ENCODE measurements at regions of chr3 and their contacts with region 1.

Region 1: DNA sequence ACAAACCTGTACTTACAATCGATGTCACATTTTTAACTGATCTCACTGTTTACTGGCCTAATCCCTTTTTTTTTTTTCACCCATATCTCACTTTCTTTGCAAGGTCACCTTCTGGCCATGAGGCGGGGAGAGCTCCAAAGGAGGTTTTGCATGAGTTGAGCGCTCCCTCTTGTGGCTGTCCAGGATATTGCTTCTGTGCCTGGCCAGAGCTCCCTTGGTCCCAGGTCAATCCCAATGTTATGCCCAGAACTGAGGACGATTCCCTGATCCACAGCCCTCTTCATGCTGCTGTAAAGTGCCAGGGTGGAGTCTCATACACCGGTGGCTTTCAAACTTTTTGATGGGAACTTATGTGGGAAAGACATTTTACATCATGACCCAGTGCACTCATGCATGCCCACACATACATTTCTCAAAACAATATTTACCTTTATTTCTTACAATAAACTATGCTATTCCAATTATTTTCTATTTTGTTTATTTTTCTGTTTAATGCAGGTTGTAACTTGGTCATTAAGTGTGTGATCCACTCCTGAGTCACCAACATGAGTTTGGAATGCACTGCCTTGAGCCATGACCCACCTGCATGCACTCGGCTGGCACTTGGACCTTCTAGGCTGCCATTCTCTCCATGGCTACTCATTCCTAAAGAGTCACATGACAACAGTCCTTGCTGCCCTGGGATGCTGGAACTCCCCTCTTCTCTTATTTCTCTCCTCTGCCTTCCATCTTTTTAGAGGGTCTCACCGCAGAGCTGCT is 9.6 kb upstream of the SST start:
- DNase-seq: peak; percentile 78
- ATAC-seq: peak; percentile 70
- H3K4me3 Mint-ChIP-seq: no peak overlapping the region
- H3K27ac Mint-ChIP-seq: no peak overlapping the region
- H3K4me1 Mint-ChIP-seq: peaks cover 7% of the 10 kb centered on the region
- H3K27me3 Mint-ChIP-seq: peaks cover 30% of the 10 kb centered on the region
- CTCF ChIP-seq: peak; percentile 88

Region 2: GRCh38 chr3:187565701-187566100 is 114.1 kb before region 1 on chr3:
- CTCF ChIA-PET with region 1: interaction called, 11 read pairs
- POLR2A ChIA-PET with region 1: no interaction called
- intact Hi-C with region 1: no loop called
- DNase-seq: no peak
- ATAC-seq: no peak
- H3K4me3 Mint-ChIP-seq: no peak overlapping the region
- H3K27ac Mint-ChIP-seq: no peak overlapping the region
- H3K4me1 Mint-ChIP-seq: no peaks in the 10 kb centered on the region
- H3K27me3 Mint-ChIP-seq: peaks cover 18% of the 10 kb centered on the region
- CTCF ChIP-seq: no peak

Region 3: GRCh38 chr3:187616307-187616972 is 63.4 kb before region 1 on chr3:
- CTCF ChIA-PET with region 1: interaction called, 89 read pairs
- POLR2A ChIA-PET with region 1: interaction called, 3 read pairs
- intact Hi-C with region 1: loop called (anchors 5 kb)
- DNase-seq: peak; percentile 77
- ATAC-seq: peak; percentile 70
- H3K4me3 Mint-ChIP-seq: no peak overlapping the region
- H3K27ac Mint-ChIP-seq: no peak overlapping the region
- H3K4me1 Mint-ChIP-seq: peaks cover 4% of the 10 kb centered on the region
- H3K27me3 Mint-ChIP-seq: peaks cover 12% of the 10 kb centered on the region
- CTCF ChIP-seq: peak; percentile 79

Region 4: DNA sequence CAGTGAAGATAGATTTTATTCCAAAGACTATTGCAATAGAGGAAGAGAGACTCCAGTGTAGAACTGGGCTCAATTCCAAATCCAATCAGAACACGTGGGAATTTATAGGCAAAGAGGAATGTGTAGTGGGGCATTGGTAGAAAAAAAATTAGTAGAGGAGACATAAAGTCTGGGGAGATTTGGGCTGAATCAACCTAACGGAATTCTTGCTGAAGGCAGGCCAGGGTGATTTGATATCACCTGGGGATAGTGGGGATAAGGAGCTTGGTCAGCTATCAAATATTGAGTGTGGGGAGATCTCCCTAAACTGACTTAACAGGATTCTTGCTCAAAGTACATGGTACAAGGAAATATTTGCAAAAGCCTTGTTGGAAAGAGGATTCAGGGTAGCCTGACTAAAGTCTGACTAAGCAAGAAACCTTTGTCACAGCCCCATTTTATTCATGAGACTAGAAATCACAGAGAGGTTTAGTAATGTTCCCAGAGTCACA is 39.2 kb before region 1 on chr3:
- CTCF ChIA-PET with region 1: interaction called, 11 read pairs
- POLR2A ChIA-PET with region 1: no interaction called
- intact Hi-C with region 1: no loop called
- DNase-seq: no peak
- ATAC-seq: no peak
- H3K4me3 Mint-ChIP-seq: no peak overlapping the region
- H3K27ac Mint-ChIP-seq: no peak overlapping the region
- H3K4me1 Mint-ChIP-seq: no peaks in the 10 kb centered on the region
- H3K27me3 Mint-ChIP-seq: peaks cover 13% of the 10 kb centered on the region
- CTCF ChIP-seq: no peak

Region 5: DNA sequence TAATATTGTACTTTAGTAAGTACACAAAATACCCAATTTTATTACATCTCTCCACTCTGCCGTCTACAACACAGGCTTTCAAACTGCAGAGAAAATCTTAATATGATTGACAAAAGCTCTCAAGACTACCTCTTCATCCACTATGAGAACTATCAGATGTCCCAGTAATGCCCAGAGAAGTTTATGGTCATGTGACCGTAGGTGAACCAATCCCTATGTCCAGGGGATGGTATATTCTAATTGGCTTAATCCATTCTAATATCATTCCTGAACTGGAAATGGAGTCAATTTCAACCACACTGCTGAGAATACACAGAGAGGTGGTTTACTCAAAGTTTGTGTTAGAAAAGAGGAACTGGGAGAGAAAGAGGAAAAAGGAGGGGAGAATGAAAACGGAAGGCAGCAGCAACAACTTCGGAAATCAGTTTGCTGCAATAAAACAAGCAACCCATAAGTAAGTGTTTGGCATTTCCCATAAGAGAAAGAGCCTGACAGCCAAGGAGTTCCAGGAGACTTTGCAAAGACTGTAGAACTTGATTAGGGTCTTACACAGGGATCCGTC is 16.9 kb before region 1 on chr3:
- CTCF ChIA-PET with region 1: interaction called, 44 read pairs
- POLR2A ChIA-PET with region 1: no interaction called
- intact Hi-C with region 1: no loop called
- DNase-seq: no peak
- ATAC-seq: no peak
- H3K4me3 Mint-ChIP-seq: no peak overlapping the region
- H3K27ac Mint-ChIP-seq: no peak overlapping the region
- H3K4me1 Mint-ChIP-seq: peaks cover 7% of the 10 kb centered on the region
- H3K27me3 Mint-ChIP-seq: peaks cover 25% of the 10 kb centered on the region
- CTCF ChIP-seq: no peak

Region 6: GRCh38 chr3:187706971-187707370 is 27.2 kb after region 1 on chr3:
- CTCF ChIA-PET with region 1: interaction called, 87 read pairs
- POLR2A ChIA-PET with region 1: no interaction called
- intact Hi-C with region 1: no loop called
- DNase-seq: no peak
- ATAC-seq: no peak
- H3K4me3 Mint-ChIP-seq: no peak overlapping the region
- H3K27ac Mint-ChIP-seq: no peak overlapping the region
- H3K4me1 Mint-ChIP-seq: no peaks in the 10 kb centered on the region
- H3K27me3 Mint-ChIP-seq: no peaks in the 10 kb centered on the region
- CTCF ChIP-seq: no peak

Region 7: GRCh38 chr3:187777331-187777941 is 97.6 kb after region 1 on chr3:
- CTCF ChIA-PET with region 1: no interaction called
- POLR2A ChIA-PET with region 1: no interaction called
- intact Hi-C with region 1: no loop called
- DNase-seq: peak; percentile 75
- ATAC-seq: peak; percentile 89
- H3K4me3 Mint-ChIP-seq: peak overlapping the region; percentile 49
- H3K27ac Mint-ChIP-seq: peak overlapping the region; percentile 98
- H3K4me1 Mint-ChIP-seq: peaks cover 34% of the 10 kb centered on the region
- H3K27me3 Mint-ChIP-seq: peaks cover 2% of the 10 kb centered on the region
- CTCF ChIP-seq: no peak